CD4-positive, alpha-beta T cell (primary cell): ENCODE measurements at regions of chr19 and their contacts with region 1.

Region 1: DNA sequence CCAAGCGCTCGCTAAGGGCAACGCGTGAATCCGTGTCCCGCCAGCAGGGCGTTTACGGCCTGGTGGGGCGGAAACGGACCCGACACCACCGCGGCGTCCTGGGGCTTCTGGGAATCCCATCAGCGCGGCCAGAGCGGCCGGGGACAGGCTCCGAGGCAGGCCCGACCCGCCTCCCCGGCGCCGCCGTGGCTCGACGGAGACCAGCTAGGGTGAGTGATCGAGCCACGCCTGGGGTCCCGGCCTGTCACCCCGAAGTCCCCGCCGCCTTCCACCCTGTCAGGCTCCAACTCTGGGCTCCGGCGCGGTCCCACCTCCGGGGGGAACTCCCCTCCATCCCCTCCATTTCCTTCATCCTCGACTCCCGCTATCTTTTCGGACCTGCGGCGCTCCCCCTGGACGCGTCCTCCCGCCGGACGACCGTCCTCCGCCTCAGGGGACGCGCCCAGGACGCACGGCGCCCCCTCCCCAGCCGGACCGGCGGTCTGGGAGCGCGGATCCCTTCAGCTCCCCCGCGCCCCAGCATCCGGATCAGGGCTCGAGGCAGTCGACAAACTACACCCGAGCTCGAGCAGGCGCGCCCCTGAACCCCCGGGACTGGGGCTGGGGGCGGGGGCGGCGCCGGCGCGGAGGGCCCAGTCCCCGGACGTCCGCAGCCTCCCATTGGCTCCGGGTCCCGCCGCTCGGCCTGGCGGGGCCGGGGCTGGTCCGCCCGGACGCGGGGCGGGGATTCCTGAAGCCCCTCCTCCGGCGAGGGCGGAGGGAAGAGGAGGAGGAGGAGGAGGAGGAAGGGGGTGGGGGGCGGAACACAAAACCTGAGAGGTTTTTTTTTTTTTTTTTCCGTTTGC is 638 bp upstream of the BICRA start:
- DNase-seq: peak; percentile 91 to 98 (median 96)
- ATAC-seq: peak; percentile 81
- H3K4me3 ChIP-seq: peak overlapping the region; percentile 85
- H3K4me3 Mint-ChIP-seq: peak overlapping the region; percentile 91
- H3K27ac ChIP-seq: peak overlapping the region; percentile 62 to 88
- H3K27ac Mint-ChIP-seq: peak overlapping the region; percentile 91
- H3K4me1 ChIP-seq: peaks cover 40% of the 10 kb centered on the region
- H3K4me1 Mint-ChIP-seq: peaks cover 30% of the 10 kb centered on the region
- H3K27me3 ChIP-seq: no peaks in the 10 kb centered on the region
- H3K27me3 Mint-ChIP-seq: no peaks in the 10 kb centered on the region
- CTCF ChIP-seq: no peak

Region 2: DNA sequence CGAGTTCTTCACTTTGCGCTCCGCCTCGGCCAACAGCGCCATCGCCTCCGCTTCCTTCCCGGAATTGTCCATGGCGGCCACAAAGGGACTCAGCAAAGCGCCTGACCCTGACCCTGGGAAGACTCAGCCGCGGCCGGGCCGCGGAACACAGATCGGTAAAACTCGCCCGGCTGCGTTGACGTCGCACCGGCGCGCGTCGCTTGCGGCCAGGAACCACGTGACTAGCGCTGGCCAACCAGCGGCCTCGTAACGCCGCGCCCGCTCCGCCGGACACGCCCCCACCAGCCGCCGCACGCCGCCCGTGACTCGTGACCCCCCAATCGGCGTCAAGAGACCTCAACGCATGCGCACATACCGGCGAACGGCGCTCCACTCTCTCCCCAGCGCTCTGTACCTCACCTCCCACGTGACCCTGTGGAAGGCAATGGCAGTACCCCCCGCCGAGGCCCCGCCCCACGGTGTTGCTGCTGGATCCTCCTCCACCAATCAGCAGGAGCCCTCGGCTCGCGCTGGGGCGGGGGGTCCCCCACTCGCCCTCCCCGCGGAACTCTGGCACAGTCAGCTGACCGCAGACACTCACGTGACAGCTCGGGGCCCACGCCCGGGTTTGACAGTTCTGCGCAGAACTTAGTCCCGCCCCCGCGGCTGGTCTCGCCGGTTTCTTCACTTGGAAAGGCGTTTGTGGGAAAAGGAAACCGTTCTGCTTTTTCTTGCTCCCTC is 93.3 kb before region 1 on chr19 and contains the start of gene NAPA:
- CTCF ChIA-PET with region 1: interaction called, 24 read pairs
- POLR2A ChIA-PET with region 1: interaction called, 34 read pairs
- intact Hi-C with region 1: loop called (anchors 1 to 2 kb)
- DNase-seq: peak; percentile 100
- ATAC-seq: peak; percentile 92
- H3K4me3 ChIP-seq: peak within 1 kb of the TSS; percentile 97
- H3K4me3 Mint-ChIP-seq: peak within 1 kb of the TSS; percentile 99
- H3K27ac ChIP-seq: peak within 1 kb of the TSS; percentile 93 to 98
- H3K27ac Mint-ChIP-seq: peak within 1 kb of the TSS; percentile 96
- H3K4me1 ChIP-seq: peaks cover 77% of the 10 kb centered on the region
- H3K4me1 Mint-ChIP-seq: peaks cover 88% of the 10 kb centered on the region
- H3K27me3 ChIP-seq: no peaks in the 10 kb centered on the region
- H3K27me3 Mint-ChIP-seq: no peaks in the 10 kb centered on the region
- CTCF ChIP-seq: no peak
- total RNA-seq, gene NAPA: 135 to 145 TPM

Region 3: GRCh38 chr19:47540728-47541127 is 67.6 kb before region 1 on chr19:
- CTCF ChIA-PET with region 1: interaction called, 4 read pairs
- POLR2A ChIA-PET with region 1: interaction called, 3 read pairs
- intact Hi-C with region 1: loop called in 1 of 2 experiments (anchors 2 kb)
- DNase-seq: peak in 2 of 14 experiments; percentile 30 to 35
- ATAC-seq: no peak
- H3K4me3 ChIP-seq: no peak overlapping the region
- H3K4me3 Mint-ChIP-seq: no peak overlapping the region
- H3K27ac ChIP-seq: peak overlapping the region in 1 of 2 donors; percentile 19
- H3K27ac Mint-ChIP-seq: peak overlapping the region; percentile 79
- H3K4me1 ChIP-seq: peaks cover 40% of the 10 kb centered on the region
- H3K4me1 Mint-ChIP-seq: peaks cover 21% of the 10 kb centered on the region
- H3K27me3 ChIP-seq: peaks cover 11 to 19% of the 10 kb centered on the region in 2 experiments
- H3K27me3 Mint-ChIP-seq: peaks cover 10% of the 10 kb centered on the region
- CTCF ChIP-seq: no peak

Region 4: DNA sequence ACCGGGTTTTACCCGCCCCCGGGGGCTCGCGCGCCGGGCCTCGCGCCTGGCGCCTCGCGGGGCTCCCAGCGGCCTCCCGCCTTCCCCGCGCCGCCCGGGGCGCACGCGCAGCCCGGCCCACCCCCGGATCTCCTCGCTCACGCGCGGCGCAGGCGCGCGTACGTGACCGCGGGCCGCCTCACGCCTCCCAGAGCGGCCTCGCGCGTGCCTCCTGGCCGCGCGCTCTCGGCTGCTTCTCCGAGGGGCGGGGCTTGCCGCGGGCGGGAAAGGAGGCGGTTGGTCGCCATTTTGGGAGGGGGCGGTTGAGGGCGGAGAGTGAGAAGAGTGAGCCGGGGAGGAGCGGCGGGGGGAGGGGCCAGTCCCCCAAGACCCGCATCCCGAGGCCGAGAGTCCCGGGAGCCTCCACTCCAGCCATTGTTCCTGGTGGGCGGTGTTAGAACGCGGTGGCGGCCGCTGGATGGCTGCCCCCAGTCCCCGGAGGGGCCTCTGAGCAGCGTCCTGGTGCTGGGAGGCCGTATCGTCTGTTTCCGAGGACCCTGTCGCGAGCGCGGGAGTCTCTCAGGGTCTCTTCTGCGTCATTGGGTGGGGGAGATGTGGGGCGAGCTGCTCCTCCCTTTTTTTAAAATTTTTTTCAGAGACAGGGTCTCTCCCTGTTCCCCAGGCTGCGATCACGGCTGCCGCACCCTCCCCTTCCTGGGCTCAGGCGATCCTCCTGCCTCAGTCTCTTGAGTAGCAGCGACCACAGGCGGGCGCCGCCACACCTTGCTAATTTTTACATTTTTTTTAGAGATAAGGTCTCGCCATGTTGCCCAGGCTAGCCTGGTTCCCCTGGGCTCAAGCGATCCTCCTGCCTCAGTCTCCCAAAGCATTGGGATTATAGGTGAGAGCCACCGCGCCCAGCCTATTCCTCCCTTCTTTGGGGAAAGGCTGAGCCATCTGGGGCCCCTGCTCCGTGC is 34.9 kb before region 1 on chr19 and contains the start of gene ZNF541:
- CTCF ChIA-PET with region 1: interaction called, 7 read pairs
- POLR2A ChIA-PET with region 1: interaction called, 11 read pairs
- intact Hi-C with region 1: loop called in 1 of 2 experiments (anchors 2 kb)
- DNase-seq: peak; percentile 80 to 96 (median 88)
- ATAC-seq: peak; percentile 88
- H3K4me3 ChIP-seq: peak within 1 kb of the TSS; percentile 63
- H3K4me3 Mint-ChIP-seq: peak within 1 kb of the TSS; percentile 76
- H3K27ac ChIP-seq: peak within 1 kb of the TSS in 1 of 2 donors; percentile 34
- H3K27ac Mint-ChIP-seq: peak within 1 kb of the TSS; percentile 15
- H3K4me1 ChIP-seq: peaks cover 48% of the 10 kb centered on the region
- H3K4me1 Mint-ChIP-seq: peaks cover 42% of the 10 kb centered on the region
- H3K27me3 ChIP-seq: no peaks in the 10 kb centered on the region
- H3K27me3 Mint-ChIP-seq: no peaks in the 10 kb centered on the region
- CTCF ChIP-seq: no peak
- total RNA-seq, gene ZNF541: 0.81 to 0.88 TPM

Region 5: GRCh38 chr19:47697863-47698609 is 89.7 kb after region 1 on chr19:
- CTCF ChIA-PET with region 1: interaction called, 8 read pairs
- POLR2A ChIA-PET with region 1: no interaction called
- intact Hi-C with region 1: loop called in 1 of 2 experiments (anchors 5 kb)
- DNase-seq: peak; percentile 16 to 75 (median 42)
- ATAC-seq: peak; percentile 77
- H3K4me3 ChIP-seq: no peak overlapping the region
- H3K4me3 Mint-ChIP-seq: no peak overlapping the region
- H3K27ac ChIP-seq: no peak overlapping the region
- H3K27ac Mint-ChIP-seq: no peak overlapping the region
- H3K4me1 ChIP-seq: peaks cover 6% of the 10 kb centered on the region
- H3K4me1 Mint-ChIP-seq: peaks cover 4% of the 10 kb centered on the region
- H3K27me3 ChIP-seq: no peaks in the 10 kb centered on the region
- H3K27me3 Mint-ChIP-seq: no peaks in the 10 kb centered on the region
- CTCF ChIP-seq: peak; percentile 86

Region 6: GRCh38 chr19:47745010-47745901 is 137.0 kb after region 1 on chr19 and contains the start of gene NOP53:
- CTCF ChIA-PET with region 1: no interaction called
- POLR2A ChIA-PET with region 1: no interaction called
- intact Hi-C with region 1: loop called in 1 of 2 experiments (anchors 2 kb)
- DNase-seq: peak; percentile 94 to 99 (median 97)
- ATAC-seq: peak; percentile 80
- H3K4me3 ChIP-seq: peak within 1 kb of the TSS; percentile 59
- H3K4me3 Mint-ChIP-seq: peak within 1 kb of the TSS; percentile 98
- H3K27ac ChIP-seq: peak within 1 kb of the TSS; percentile 93 to 98
- H3K27ac Mint-ChIP-seq: peak within 1 kb of the TSS; percentile 94
- H3K4me1 ChIP-seq: peaks cover 66% of the 10 kb centered on the region
- H3K4me1 Mint-ChIP-seq: peaks cover 39% of the 10 kb centered on the region
- H3K27me3 ChIP-seq: no peaks in the 10 kb centered on the region
- H3K27me3 Mint-ChIP-seq: no peaks in the 10 kb centered on the region
- CTCF ChIP-seq: no peak
- total RNA-seq, gene NOP53: 1,074 to 1,154 TPM